ENCODE measurements at regions of chr16 and their contacts with region 1.

Region 1: GRCh38 chr16:9134739-9135138 is 43.3 kb downstream of the HAPSTR1 start:
- DNase-seq: peak; percentile 78
- H3K4me3 Mint-ChIP-seq: no peak overlapping the region
- H3K27ac Mint-ChIP-seq: no peak overlapping the region
- H3K4me1 Mint-ChIP-seq: peaks cover 8% of the 10 kb centered on the region
- H3K27me3 Mint-ChIP-seq: peaks cover 16% of the 10 kb centered on the region
- CTCF ChIP-seq: peak; percentile 75

Region 2: GRCh38 chr16:8828541-8829165 is 306.1 kb before region 1 on chr16:
- CTCF ChIA-PET with region 1: no interaction called
- intact Hi-C with region 1: no loop called
- DNase-seq: no peak
- H3K4me3 Mint-ChIP-seq: no peak overlapping the region
- H3K27ac Mint-ChIP-seq: no peak overlapping the region
- H3K4me1 Mint-ChIP-seq: no peaks in the 10 kb centered on the region
- H3K27me3 Mint-ChIP-seq: no peaks in the 10 kb centered on the region
- CTCF ChIP-seq: no peak

Region 3: DNA sequence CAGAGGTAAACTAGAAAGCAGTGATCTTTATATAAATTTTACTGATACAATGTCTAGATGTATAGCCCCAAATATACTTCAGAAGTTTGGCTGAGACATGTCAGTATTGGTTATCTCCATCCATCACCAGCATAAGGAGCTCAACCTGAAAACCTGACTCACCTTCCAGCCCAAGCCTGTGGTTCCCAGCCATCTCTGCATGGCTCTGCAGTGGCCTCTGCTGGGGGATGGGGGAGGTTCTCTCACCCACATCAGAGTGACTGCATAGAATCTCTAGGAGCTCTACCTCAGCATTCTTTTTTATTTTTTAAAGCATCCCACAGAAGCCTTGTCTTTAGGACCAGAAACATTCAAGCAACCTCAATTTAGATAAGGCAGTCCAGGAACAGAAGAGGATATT is 198.3 kb before region 1 on chr16:
- CTCF ChIA-PET with region 1: interaction called, 11 read pairs
- intact Hi-C with region 1: no loop called
- DNase-seq: peak; percentile 86
- H3K4me3 Mint-ChIP-seq: no peak overlapping the region
- H3K27ac Mint-ChIP-seq: no peak overlapping the region
- H3K4me1 Mint-ChIP-seq: peaks cover 50% of the 10 kb centered on the region
- H3K27me3 Mint-ChIP-seq: no peaks in the 10 kb centered on the region
- CTCF ChIP-seq: peak; percentile 60

Region 4: GRCh38 chr16:9099131-9099625 is 35.6 kb before region 1 on chr16:
- CTCF ChIA-PET with region 1: interaction called, 3 read pairs
- intact Hi-C with region 1: loop called (anchors 5 kb)
- DNase-seq: no peak
- H3K4me3 Mint-ChIP-seq: no peak overlapping the region
- H3K27ac Mint-ChIP-seq: peak overlapping the region; percentile 64
- H3K4me1 Mint-ChIP-seq: peaks cover 94% of the 10 kb centered on the region
- H3K27me3 Mint-ChIP-seq: no peaks in the 10 kb centered on the region
- CTCF ChIP-seq: no peak

Region 5: DNA sequence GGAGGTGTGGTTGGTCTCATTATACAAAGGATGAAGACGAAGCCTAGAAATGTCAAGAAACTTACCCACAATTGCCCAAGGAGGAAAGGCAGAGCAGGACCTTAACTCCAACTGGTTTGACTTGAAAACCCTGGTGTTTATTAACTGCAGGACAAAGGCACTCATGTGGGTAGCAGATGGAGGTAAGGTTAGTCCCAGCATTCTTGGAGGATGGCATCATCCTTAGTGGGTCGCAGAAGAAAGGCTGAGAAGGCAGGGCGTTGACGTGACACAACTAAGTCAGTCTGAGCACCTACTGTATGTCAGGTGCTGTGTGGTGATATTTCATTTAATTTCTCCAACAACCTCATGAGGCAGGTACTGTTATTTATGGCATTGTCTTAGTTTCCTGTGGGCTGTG is 58.0 kb after region 1 on chr16:
- CTCF ChIA-PET with region 1: no interaction called
- intact Hi-C with region 1: no loop called
- DNase-seq: peak; percentile 61
- H3K4me3 Mint-ChIP-seq: no peak overlapping the region
- H3K27ac Mint-ChIP-seq: no peak overlapping the region
- H3K4me1 Mint-ChIP-seq: peaks cover 14% of the 10 kb centered on the region
- H3K27me3 Mint-ChIP-seq: peaks cover 27% of the 10 kb centered on the region
- CTCF ChIP-seq: no peak

Region 6: GRCh38 chr16:9437115-9437514 is 302.4 kb after region 1 on chr16:
- CTCF ChIA-PET with region 1: no interaction called
- intact Hi-C with region 1: no loop called
- DNase-seq: no peak
- H3K4me3 Mint-ChIP-seq: no peak overlapping the region
- H3K27ac Mint-ChIP-seq: no peak overlapping the region
- H3K4me1 Mint-ChIP-seq: no peaks in the 10 kb centered on the region
- H3K27me3 Mint-ChIP-seq: peaks cover 21% of the 10 kb centered on the region
- CTCF ChIP-seq: no peak

Measured in Calu3 (cell line).